ENCODE measurements at regions of chr9 and their contacts with region 1.

Region 1: DNA sequence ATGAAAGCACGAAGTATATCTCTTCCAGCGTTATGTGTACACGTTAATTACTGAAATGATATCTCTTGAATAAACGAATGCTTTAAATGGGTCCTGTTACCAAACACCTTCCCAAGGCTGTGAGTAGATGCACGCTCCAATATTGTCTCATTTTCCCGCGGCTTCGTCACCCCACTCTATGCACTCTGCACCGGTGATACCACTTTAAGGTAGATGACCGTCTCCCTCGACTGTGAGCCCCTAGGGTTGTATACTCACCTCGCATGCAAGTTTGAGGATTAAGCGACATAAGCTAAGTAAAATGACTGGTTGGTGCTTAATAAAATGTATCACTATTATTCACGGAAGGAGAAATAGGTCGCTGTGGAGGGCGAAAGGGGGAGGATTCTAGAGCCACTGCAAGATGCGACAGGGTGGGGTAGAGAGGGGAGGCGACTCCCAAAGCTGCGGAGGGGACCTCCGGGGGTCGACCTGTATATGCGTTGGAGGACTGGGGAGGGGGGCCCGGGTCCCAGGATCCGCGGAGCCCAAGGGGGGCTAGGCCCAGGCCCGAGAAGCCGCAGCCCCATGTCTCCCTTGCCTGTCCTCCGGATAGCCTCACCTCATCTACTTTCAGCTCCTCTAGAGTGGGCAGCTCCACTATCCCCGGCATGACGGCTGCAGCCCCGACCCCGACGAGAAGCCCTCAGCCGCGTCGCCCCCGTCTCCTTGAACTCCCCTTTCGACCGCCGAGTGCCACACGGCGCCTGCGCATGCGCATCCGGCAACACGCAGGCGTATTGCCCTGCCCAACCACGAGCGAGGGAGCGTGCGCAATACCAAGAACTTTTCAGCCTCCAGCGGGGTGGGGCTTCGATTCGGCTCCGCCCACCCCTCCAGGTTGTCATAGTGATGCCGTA is at the starts of genes MORN5 and NDUFA8:
- DNase-seq: peak; percentile 97 to 98
- H3K4me3 ChIP-seq: peak within 1 kb of the TSS; percentile 83
- H3K4me3 Mint-ChIP-seq: peak within 1 kb of the TSS; percentile 98
- H3K27ac Mint-ChIP-seq: peak within 1 kb of the TSS; percentile 99
- H3K4me1 ChIP-seq: 0 out of 2 replicates have a peak, but pooled peaks cover 3% of the 10 kb centered on the region
- H3K4me1 Mint-ChIP-seq: peaks cover 6% of the 10 kb centered on the region
- H3K27me3 ChIP-seq: no peaks in the 10 kb centered on the region
- H3K27me3 Mint-ChIP-seq: no peaks in the 10 kb centered on the region
- CTCF ChIP-seq: no peak
- total RNA-seq, gene MORN5: not detected in 2 replicates
- total RNA-seq, gene NDUFA8: 58.0 and 63.5 TPM in 2 replicates

Region 2: DNA sequence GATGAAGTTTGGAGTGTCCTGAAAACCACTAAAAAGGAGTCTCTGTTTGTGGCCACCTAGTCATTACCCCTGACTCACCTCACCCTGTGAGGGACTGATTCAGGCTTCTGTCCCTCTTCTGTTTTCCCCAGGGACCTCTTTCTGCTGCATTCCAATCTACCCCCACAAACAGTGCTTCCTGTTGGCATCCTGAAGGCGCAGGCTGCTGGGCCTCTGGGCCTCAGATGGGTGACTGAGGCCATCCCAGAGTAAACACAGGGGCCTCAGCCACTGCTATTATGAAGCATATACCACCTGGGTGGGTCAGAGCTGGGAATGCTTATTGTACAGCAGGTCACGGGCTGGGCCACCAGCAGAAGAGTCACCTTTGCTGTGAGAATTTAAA is 20.4 kb after region 1 on chr9:
- CTCF ChIA-PET with region 1: no interaction called
- POLR2A ChIA-PET with region 1: no interaction called
- intact Hi-C with region 1: loop called (anchors 2 kb)
- DNase-seq: peak; percentile 54 to 84
- H3K4me3 ChIP-seq: no peak overlapping the region
- H3K4me3 Mint-ChIP-seq: no peak overlapping the region
- H3K27ac Mint-ChIP-seq: peak overlapping the region; percentile 59
- H3K4me1 ChIP-seq: peaks cover 33% of the 10 kb centered on the region
- H3K4me1 Mint-ChIP-seq: peaks cover 9% of the 10 kb centered on the region
- H3K27me3 ChIP-seq: no peaks in the 10 kb centered on the region
- H3K27me3 Mint-ChIP-seq: no peaks in the 10 kb centered on the region
- CTCF ChIP-seq: no peak

Measured in Caco-2 (cell line).